SK-N-SH (cell line): ENCODE measurements at regions of chr9 and their contacts with region 1.

Region 1: GRCh38 chr9:76419782-76420380 is 25.7 kb upstream of the RFK start:
- DNase-seq: peak; percentile 29
- H3K4me3 ChIP-seq: no peak overlapping the region
- H3K27ac ChIP-seq: no peak overlapping the region
- H3K4me1 ChIP-seq: no peaks in the 10 kb centered on the region
- H3K27me3 ChIP-seq: no peaks in the 10 kb centered on the region; the same call in 1 of the 2 replicates
- CTCF ChIP-seq: peak; percentile 64
- EP300 ChIP-seq: no peak
- RAD21 ChIP-seq: peak; percentile 25

Region 2: DNA sequence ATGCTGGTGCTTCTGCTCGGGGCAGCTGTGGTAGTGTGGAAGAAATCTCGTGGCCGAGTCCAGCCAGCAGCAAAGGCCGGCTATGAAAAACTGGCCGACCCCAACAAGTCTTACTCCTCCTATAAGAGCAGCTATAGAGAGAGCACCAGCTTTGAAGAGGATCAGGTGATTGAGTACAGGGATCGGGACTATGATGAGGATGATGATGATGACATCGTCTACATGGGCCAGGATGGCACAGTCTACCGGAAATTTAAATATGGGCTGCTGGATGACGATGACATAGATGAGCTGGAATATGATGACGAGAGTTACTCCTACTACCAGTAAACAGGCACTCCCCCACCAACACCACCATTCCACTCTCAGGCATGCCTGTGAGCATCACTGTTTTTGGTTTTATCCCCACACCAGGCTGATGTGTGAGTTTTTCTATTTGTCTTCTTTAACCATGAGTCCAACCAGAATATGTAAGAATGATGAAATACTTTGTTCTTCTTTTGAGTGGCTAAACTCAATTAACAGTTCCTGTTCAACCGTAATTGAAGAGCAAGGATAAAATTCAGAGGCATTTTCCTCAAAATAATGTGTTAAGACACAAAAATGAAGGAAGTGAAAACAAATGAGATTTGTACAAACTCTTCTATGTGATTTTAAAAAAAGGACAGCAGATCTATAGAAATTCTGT is 61.1 kb before region 1 on chr9:
- CTCF ChIA-PET with region 1: no interaction called
- POLR2A ChIA-PET with region 1: no interaction called
- DNase-seq: no peak
- H3K4me3 ChIP-seq: no peak overlapping the region
- H3K27ac ChIP-seq: no peak overlapping the region
- H3K4me1 ChIP-seq: no peaks in the 10 kb centered on the region
- H3K27me3 ChIP-seq: peaks cover 7% of the 10 kb centered on the region; the same call in 1 of the 2 replicates
- CTCF ChIP-seq: no peak
- EP300 ChIP-seq: no peak
- RAD21 ChIP-seq: no peak

Region 3: GRCh38 chr9:76405868-76406267 is 14.0 kb before region 1 on chr9:
- CTCF ChIA-PET with region 1: interaction called, 20 read pairs
- POLR2A ChIA-PET with region 1: no interaction called
- DNase-seq: no peak
- H3K4me3 ChIP-seq: no peak overlapping the region
- H3K27ac ChIP-seq: no peak overlapping the region
- H3K4me1 ChIP-seq: peaks cover 0 to 4% of the 10 kb centered on the region in 2 experiments; a peak in 1 of 4 replicates
- H3K27me3 ChIP-seq: no peaks in the 10 kb centered on the region; the same call in 1 of the 2 replicates
- CTCF ChIP-seq: no peak
- EP300 ChIP-seq: no peak
- RAD21 ChIP-seq: no peak

Region 4: GRCh38 chr9:76530458-76531110 is 110.7 kb after region 1 on chr9:
- CTCF ChIA-PET with region 1: no interaction called
- POLR2A ChIA-PET with region 1: no interaction called
- DNase-seq: no peak
- H3K4me3 ChIP-seq: no peak overlapping the region
- H3K27ac ChIP-seq: no peak overlapping the region
- H3K4me1 ChIP-seq: no peaks in the 10 kb centered on the region
- H3K27me3 ChIP-seq: peaks cover 34% of the 10 kb centered on the region; the same call in 1 of the 2 replicates
- CTCF ChIP-seq: no peak
- EP300 ChIP-seq: no peak
- RAD21 ChIP-seq: no peak